ENCODE measurements at regions of chr1 and their contacts with region 1.

Region 1: GRCh38 chr1:155729031-155729898 is 40.4 kb downstream of the DAP3 start:
- DNase-seq: peak; percentile 66
- ATAC-seq: peak; percentile 98
- H3K4me3 Mint-ChIP-seq: no peak overlapping the region
- H3K27ac Mint-ChIP-seq: peak overlapping the region; percentile 91
- H3K4me1 Mint-ChIP-seq: no peaks in the 10 kb centered on the region
- H3K27me3 Mint-ChIP-seq: no peaks in the 10 kb centered on the region
- CTCF ChIP-seq: peak; percentile 68

Region 2: GRCh38 chr1:155424091-155424490 is 305.2 kb before region 1 on chr1:
- CTCF ChIA-PET with region 1: no interaction called
- POLR2A ChIA-PET with region 1: no interaction called
- DNase-seq: no peak
- ATAC-seq: no peak
- H3K4me3 Mint-ChIP-seq: no peak overlapping the region
- H3K27ac Mint-ChIP-seq: no peak overlapping the region
- H3K4me1 Mint-ChIP-seq: no peaks in the 10 kb centered on the region
- H3K27me3 Mint-ChIP-seq: no peaks in the 10 kb centered on the region
- CTCF ChIP-seq: no peak

Region 3: DNA sequence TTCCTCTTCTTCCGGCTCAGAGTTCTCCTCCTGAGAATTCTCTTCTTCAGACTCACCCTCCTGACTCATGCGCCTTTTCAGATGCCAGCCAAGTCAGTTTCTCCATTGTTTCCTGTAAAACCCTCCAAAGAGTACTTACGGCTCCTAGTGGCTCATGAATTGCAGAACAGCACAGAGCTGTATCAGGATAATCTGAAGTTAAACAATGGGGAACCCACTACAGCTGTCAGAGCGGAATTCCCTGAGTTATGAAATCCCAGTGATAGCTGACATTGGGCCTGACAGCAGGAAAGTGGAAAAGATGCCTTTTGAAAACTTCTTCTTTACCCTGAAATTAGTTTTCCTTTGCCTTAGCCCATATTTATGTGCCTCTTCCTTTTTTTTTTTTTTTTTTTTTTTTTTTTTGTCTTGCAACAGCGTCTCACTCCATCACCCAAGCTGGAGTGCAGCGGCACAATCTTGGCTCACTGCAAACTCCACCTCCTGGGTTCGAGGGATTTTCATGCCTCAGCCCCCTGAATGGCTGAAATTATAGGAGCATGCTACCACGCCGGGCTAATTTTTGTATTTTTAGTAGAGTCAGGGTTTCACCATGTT is 80.6 kb before region 1 on chr1:
- CTCF ChIA-PET with region 1: interaction called, 10 read pairs
- POLR2A ChIA-PET with region 1: no interaction called
- DNase-seq: no peak
- ATAC-seq: peak; percentile 90
- H3K4me3 Mint-ChIP-seq: no peak overlapping the region
- H3K27ac Mint-ChIP-seq: no peak overlapping the region
- H3K4me1 Mint-ChIP-seq: peaks cover 5% of the 10 kb centered on the region
- H3K27me3 Mint-ChIP-seq: peaks cover 8% of the 10 kb centered on the region
- CTCF ChIP-seq: no peak

Region 4: GRCh38 chr1:155715777-155716176 is 13.5 kb before region 1 on chr1:
- CTCF ChIA-PET with region 1: interaction called, 11 read pairs
- POLR2A ChIA-PET with region 1: no interaction called
- DNase-seq: no peak
- ATAC-seq: no peak
- H3K4me3 Mint-ChIP-seq: no peak overlapping the region
- H3K27ac Mint-ChIP-seq: no peak overlapping the region
- H3K4me1 Mint-ChIP-seq: no peaks in the 10 kb centered on the region
- H3K27me3 Mint-ChIP-seq: no peaks in the 10 kb centered on the region; the same call in 1 of the 2 replicates
- CTCF ChIP-seq: no peak

Region 5: DNA sequence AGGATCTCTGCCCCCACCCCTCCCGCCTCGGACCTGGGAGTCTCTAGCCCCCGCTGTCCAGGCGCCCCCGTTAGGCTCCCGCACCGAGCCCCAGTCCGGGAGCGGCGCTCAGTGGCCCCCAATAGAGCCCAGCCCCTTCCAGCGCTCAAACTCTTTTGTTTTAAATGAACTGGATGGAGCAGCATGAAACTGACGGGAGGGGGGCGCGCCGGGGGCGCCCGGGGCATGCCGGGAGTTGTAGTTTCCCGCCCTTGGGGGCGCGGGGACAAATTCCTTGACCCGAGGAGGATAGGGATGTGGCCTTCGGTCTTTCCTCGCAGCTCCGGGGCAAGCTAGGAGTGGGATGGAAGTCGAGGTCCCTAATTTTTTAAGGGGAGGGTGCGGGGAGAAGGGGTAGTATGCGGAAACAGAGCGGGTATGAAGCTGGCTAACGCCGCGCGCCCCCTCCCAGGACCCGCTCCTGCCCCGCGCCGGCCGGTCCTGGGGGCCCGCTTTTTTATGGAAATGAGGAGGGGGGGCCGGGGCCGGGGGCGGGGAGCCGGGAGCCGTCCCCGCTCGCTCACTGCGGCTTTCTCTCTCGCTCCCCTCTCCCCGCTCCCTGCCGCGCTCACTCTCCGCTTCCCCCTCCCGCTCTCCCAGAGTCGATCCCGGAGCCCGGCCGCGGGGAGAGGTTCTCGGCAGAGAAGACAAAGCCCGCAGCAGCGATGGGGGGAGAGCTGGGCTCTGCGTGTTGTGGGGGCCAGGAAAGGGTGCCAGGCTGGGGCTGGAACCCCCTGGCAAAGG is 353.2 kb after region 1 on chr1 and contains the start of gene MEX3A:
- CTCF ChIA-PET with region 1: no interaction called
- POLR2A ChIA-PET with region 1: no interaction called
- DNase-seq: peak; percentile 99
- ATAC-seq: peak; percentile 73
- H3K4me3 Mint-ChIP-seq: peak within 1 kb of the TSS; percentile 97
- H3K27ac Mint-ChIP-seq: peak within 1 kb of the TSS; percentile 93
- H3K4me1 Mint-ChIP-seq: peaks cover 65% of the 10 kb centered on the region
- H3K27me3 Mint-ChIP-seq: no peaks in the 10 kb centered on the region
- CTCF ChIP-seq: no peak
- total RNA-seq, gene MEX3A: 66.3 to 79.1 TPM (median 70.6 TPM) in 3 replicates

Measured in WTC11 (cell line).